BJ (cell line): ENCODE measurements at regions of chr15 and their contacts with region 1.

Region 1: DNA sequence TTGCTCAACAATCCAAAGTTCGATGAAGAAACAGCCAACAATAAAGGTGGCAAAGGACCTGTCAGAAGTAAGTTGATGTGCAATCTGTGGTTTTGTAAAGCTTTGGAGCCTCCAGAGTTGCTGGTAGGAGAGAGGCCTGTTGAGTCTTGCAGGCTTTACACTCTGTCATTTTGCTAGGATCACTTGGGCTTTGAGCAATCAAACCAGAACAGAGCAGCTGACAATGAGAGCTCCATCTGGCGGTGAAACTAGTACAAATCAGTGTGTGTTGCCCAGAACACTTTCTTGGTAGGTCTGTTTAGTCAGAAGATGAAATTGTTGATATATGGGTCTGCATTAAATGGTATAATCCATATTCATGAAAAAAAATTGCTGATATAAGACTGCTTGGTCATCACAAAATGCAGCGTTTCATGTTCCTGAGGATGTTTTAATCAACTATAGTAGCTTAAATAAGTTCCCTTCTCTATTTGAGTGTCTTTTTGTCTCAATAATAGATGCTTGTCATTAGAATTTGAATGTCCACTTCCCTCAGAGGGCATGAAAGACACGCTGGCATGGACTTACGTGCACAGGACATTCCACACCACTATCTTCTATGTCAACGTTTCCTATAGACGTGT is 25.7 kb downstream of the TMOD2 start:
- DNase-seq: no peak
- H3K4me3 ChIP-seq: no peak overlapping the region
- H3K27me3 ChIP-seq: no peaks in the 10 kb centered on the region
- CTCF ChIP-seq: peak; percentile 81

Region 2: GRCh38 chr15:51516291-51516690 is 260.8 kb before region 1 on chr15:
- CTCF ChIA-PET with region 1: no interaction called
- POLR2A ChIA-PET with region 1: no interaction called
- DNase-seq: no peak
- H3K4me3 ChIP-seq: no peak overlapping the region
- H3K27me3 ChIP-seq: no peaks in the 10 kb centered on the region
- CTCF ChIP-seq: no peak

Region 3: DNA sequence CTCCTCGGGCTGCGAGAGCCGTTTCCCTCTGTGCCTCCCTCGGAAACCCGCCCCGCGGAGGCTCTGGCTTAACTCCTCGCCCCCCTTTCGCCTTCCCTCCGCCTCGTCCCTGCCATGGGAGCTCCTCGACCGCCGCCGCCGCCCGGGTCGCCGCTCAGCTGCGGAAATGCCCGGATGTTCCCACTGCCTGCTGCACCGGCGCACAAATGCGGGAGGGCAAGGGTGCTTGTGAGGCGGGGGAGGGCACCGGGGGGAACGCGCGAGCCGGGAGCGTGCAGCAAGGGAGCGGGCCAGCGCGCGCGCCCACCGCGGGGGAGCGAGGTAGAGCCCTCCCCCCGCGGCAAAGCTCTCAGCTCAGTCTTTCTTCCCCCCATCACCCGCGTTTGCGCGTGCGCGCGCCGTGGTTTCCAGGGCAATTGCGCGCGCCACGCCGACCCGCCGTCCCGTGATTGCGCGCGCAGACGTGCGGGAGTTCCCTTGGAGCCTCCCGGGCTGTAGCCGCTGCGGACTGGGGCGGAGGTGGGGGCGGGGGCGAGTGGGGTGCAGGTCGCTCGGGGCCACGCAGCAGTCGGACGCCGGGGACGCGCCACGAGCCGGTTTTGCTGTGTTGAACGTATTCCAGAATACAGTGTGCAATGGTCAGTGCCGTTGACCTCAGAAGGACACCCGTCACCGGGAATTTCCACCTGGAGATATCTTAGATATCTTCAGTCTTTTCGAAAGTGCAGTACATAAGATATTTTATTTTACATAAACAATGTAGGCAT is 154.3 kb before region 1 on chr15 and contains the start of gene DMXL2:
- CTCF ChIA-PET with region 1: interaction called, 13 read pairs
- POLR2A ChIA-PET with region 1: no interaction called
- DNase-seq: peak; percentile 27
- H3K4me3 ChIP-seq: peak within 1 kb of the TSS; percentile 77
- H3K27me3 ChIP-seq: no peaks in the 10 kb centered on the region
- CTCF ChIP-seq: no peak
- polyA plus RNA-seq, gene DMXL2: 3.8 and 9.1 TPM in 2 replicates

Region 4: GRCh38 chr15:51634591-51635198 is 142.4 kb before region 1 on chr15:
- CTCF ChIA-PET with region 1: interaction called, 14 read pairs
- POLR2A ChIA-PET with region 1: no interaction called
- DNase-seq: no peak
- H3K4me3 ChIP-seq: no peak overlapping the region
- H3K27me3 ChIP-seq: peaks cover 2% of the 10 kb centered on the region; the same call in 1 of the 2 replicates
- CTCF ChIP-seq: no peak

Region 5: GRCh38 chr15:51658670-51659069 is 118.4 kb before region 1 on chr15:
- CTCF ChIA-PET with region 1: interaction called, 51 read pairs
- POLR2A ChIA-PET with region 1: no interaction called
- DNase-seq: no peak
- H3K4me3 ChIP-seq: no peak overlapping the region
- H3K27me3 ChIP-seq: no peaks in the 10 kb centered on the region
- CTCF ChIP-seq: no peak

Region 6: DNA sequence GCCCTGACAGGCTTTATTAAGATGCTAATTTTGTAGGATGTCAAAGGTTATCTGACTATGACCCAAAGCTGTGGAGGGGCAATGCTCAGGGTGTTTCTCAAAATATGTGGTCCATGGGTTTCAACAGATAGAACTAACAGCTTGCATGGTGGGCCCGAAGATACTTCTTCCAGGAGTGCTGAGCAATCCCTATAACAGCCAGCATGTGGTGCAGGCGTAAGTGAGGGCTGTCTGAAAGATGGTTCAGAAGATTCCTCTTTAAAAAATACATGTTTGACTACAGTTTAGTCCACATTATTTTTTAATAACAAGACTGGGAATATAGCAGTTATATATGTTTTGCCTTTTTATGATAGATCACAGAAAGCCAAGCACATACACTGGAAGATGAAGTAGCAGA is 88.2 kb before region 1 on chr15:
- CTCF ChIA-PET with region 1: interaction called, 25 read pairs
- POLR2A ChIA-PET with region 1: no interaction called
- DNase-seq: no peak
- H3K4me3 ChIP-seq: no peak overlapping the region
- H3K27me3 ChIP-seq: peaks cover 2% of the 10 kb centered on the region; the same call in 1 of the 2 replicates
- CTCF ChIP-seq: 0 out of 2 replicates have a peak, but pooled peaks have one; percentile 22

Region 7: GRCh38 chr15:51759557-51760070 is 17.4 kb before region 1 on chr15:
- CTCF ChIA-PET with region 1: interaction called, 100 read pairs
- POLR2A ChIA-PET with region 1: no interaction called
- DNase-seq: peak; percentile 83
- H3K4me3 ChIP-seq: no peak overlapping the region
- H3K27me3 ChIP-seq: no peaks in the 10 kb centered on the region
- CTCF ChIP-seq: peak; percentile 44